HepG2 (cell line): ENCODE measurements at regions of chr17 and their contacts with region 1.

Region 1: GRCh38 chr17:48351831-48352332 is 78.1 kb downstream of the SKAP1 start:
- DNase-seq: peak; percentile 5
- ATAC-seq: no peak
- H3K4me3 ChIP-seq: no peak overlapping the region
- H3K27ac ChIP-seq: no peak overlapping the region
- H3K4me1 ChIP-seq: no peaks in the 10 kb centered on the region
- H3K27me3 ChIP-seq: no peaks in the 10 kb centered on the region
- CTCF ChIP-seq: peak; percentile 50
- EP300 ChIP-seq: no peak
- POLR2A ChIP-seq: no peak
- RAD21 ChIP-seq: no peak

Region 2: GRCh38 chr17:48392857-48393256 is 41.0 kb after region 1 on chr17:
- CTCF ChIA-PET with region 1: no interaction called
- POLR2A ChIA-PET with region 1: no interaction called
- in situ Hi-C with region 1: no loop called
- intact Hi-C with region 1: loop called (anchors 2 kb)
- DNase-seq: no peak
- ATAC-seq: no peak
- H3K4me3 ChIP-seq: no peak overlapping the region
- H3K27ac ChIP-seq: no peak overlapping the region
- H3K4me1 ChIP-seq: no peaks in the 10 kb centered on the region
- H3K27me3 ChIP-seq: peaks cover 0 to 17% of the 10 kb centered on the region in 2 experiments; a peak in 2 of 5 replicates
- CTCF ChIP-seq: no peak
- EP300 ChIP-seq: no peak
- POLR2A ChIP-seq: no peak
- RAD21 ChIP-seq: no peak

Region 3: GRCh38 chr17:48457080-48457836 is 105.4 kb after region 1 on chr17:
- CTCF ChIA-PET with region 1: no interaction called
- POLR2A ChIA-PET with region 1: no interaction called
- in situ Hi-C with region 1: no loop called
- intact Hi-C with region 1: loop called (anchors 10 kb)
- DNase-seq: peak; percentile 42
- ATAC-seq: peak; percentile 97
- H3K4me3 ChIP-seq: no peak overlapping the region
- H3K27ac ChIP-seq: no peak overlapping the region
- H3K4me1 ChIP-seq: no peaks in the 10 kb centered on the region
- H3K27me3 ChIP-seq: peaks cover 0 to 18% of the 10 kb centered on the region in 2 experiments; a peak in 2 of 5 replicates
- CTCF ChIP-seq: peak; percentile 88
- EP300 ChIP-seq: no peak
- POLR2A ChIP-seq: no peak
- RAD21 ChIP-seq: peak; percentile 41; the same call in 1 of the 2 replicates